Esophagus squamous epithelium (tissue), 5 donors: ENCODE measurements at regions of chr10 and their contacts with region 1.

Region 1: GRCh38 chr10:72048450-72049124 is 39.8 kb downstream of the SPOCK2 start:
- DNase-seq: peak; percentile 13
- H3K4me3 ChIP-seq: no peak overlapping the region
- H3K27ac ChIP-seq: no peak overlapping the region
- H3K4me1 ChIP-seq: peaks cover 7 to 27% (median 10%) of the 10 kb centered on the region in 3 donors
- H3K27me3 ChIP-seq: no peaks in the 10 kb centered on the region
- CTCF ChIP-seq: peak; percentile 96 to 100 (median 100)
- POLR2A ChIP-seq: no peak

Region 2: GRCh38 chr10:71957546-71958275 is 90.9 kb before region 1 on chr10:
- intact Hi-C with region 1: loop called (anchors 5 kb)
- DNase-seq: no peak
- H3K4me3 ChIP-seq: no peak overlapping the region
- H3K27ac ChIP-seq: no peak overlapping the region
- H3K4me1 ChIP-seq: peaks cover 4 to 45% (median 5%) of the 10 kb centered on the region in 3 donors
- H3K27me3 ChIP-seq: no peaks in the 10 kb centered on the region
- CTCF ChIP-seq: peak in 1 of 6 experiments; percentile 9
- POLR2A ChIP-seq: no peak

Region 3: GRCh38 chr10:72223743-72224101 is 175.1 kb after region 1 on chr10:
- intact Hi-C with region 1: loop called (anchors 5 kb)
- DNase-seq: no peak
- H3K4me3 ChIP-seq: no peak overlapping the region
- H3K27ac ChIP-seq: peak overlapping the region; percentile 38 to 89 (median 82)
- H3K4me1 ChIP-seq: peaks cover 9 to 73% (median 25%) of the 10 kb centered on the region in 3 donors
- H3K27me3 ChIP-seq: no peaks in the 10 kb centered on the region
- CTCF ChIP-seq: no peak
- POLR2A ChIP-seq: peak in 1 of 4 donors; percentile 23